ENCODE measurements at regions of chr9 and their contacts with region 1.

Region 1: GRCh38 chr9:79571309-79572031 is at the start of gene TLE4:
- DNase-seq: peak; percentile 98 to 100 (median 99)
- ATAC-seq: peak; percentile 85
- H3K4me3 ChIP-seq: peak within 1 kb of the TSS; percentile 91
- H3K4me3 Mint-ChIP-seq: peak within 1 kb of the TSS; percentile 86
- H3K27ac ChIP-seq: peak within 1 kb of the TSS; percentile 72 to 85
- H3K27ac Mint-ChIP-seq: peak within 1 kb of the TSS; percentile 92
- H3K4me1 ChIP-seq: peaks cover 17% of the 10 kb centered on the region
- H3K4me1 Mint-ChIP-seq: peaks cover 33% of the 10 kb centered on the region
- H3K27me3 ChIP-seq: peaks cover 0 to 9% of the 10 kb centered on the region in 2 experiments
- H3K27me3 Mint-ChIP-seq: peaks cover 4% of the 10 kb centered on the region
- CTCF ChIP-seq: no peak
- total RNA-seq, gene TLE4: 125 to 136 TPM

Region 2: DNA sequence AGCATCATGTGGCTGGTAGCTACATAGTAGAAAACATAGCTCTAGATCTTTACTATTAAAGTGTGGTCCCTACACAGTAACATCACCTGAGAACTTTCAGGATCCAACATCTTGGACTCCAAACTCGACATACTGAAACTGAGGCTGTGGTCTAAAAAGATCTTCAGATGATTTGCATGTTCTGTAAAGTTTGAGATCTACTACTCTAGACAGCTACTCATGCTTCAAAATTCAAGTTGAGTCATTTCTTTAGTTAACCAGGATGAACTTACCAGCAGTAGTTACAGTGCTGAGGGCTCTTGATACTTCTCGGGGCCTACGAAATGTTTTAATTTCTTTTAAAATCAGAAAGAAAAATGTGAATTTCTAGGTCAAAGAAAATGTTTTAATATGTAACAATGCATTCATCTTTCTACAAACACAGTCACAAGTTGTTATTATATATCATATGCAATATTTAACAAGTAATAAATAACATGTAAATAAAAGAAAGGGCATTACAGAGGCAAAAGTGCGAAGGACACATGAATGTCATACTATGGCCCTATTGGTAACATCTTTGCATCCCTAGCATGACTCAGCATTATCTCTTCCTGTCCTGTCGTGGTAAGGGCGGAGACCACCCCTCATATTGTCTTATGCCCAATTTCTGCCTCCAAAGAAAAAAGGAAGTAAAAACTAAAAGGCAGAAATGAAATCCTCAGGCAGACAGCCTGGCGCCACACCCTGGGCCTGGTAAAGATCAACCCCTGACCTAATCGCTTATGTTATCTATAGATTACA is 563.6 kb before region 1 on chr9:
- CTCF ChIA-PET with region 1: no interaction called
- POLR2A ChIA-PET with region 1: no interaction called
- intact Hi-C with region 1: no loop called
- DNase-seq: no peak
- ATAC-seq: no peak
- H3K4me3 ChIP-seq: no peak overlapping the region
- H3K4me3 Mint-ChIP-seq: no peak overlapping the region
- H3K27ac ChIP-seq: no peak overlapping the region
- H3K27ac Mint-ChIP-seq: no peak overlapping the region
- H3K4me1 ChIP-seq: no peaks in the 10 kb centered on the region
- H3K4me1 Mint-ChIP-seq: no peaks in the 10 kb centered on the region
- H3K27me3 ChIP-seq: no peaks in the 10 kb centered on the region
- H3K27me3 Mint-ChIP-seq: peaks cover 6% of the 10 kb centered on the region
- CTCF ChIP-seq: no peak

Region 3: GRCh38 chr9:79471580-79472543 is 99.6 kb before region 1 on chr9:
- CTCF ChIA-PET with region 1: no interaction called
- POLR2A ChIA-PET with region 1: no interaction called
- intact Hi-C with region 1: loop called (anchors 5 to 10 kb)
- DNase-seq: peak in 12 of 14 experiments; percentile 2 to 51 (median 22)
- ATAC-seq: peak; percentile 68
- H3K4me3 ChIP-seq: no peak overlapping the region
- H3K4me3 Mint-ChIP-seq: no peak overlapping the region
- H3K27ac ChIP-seq: no peak overlapping the region
- H3K27ac Mint-ChIP-seq: peak overlapping the region; percentile 70
- H3K4me1 ChIP-seq: no peaks in the 10 kb centered on the region
- H3K4me1 Mint-ChIP-seq: peaks cover 13% of the 10 kb centered on the region
- H3K27me3 ChIP-seq: no peaks in the 10 kb centered on the region
- H3K27me3 Mint-ChIP-seq: no peaks in the 10 kb centered on the region
- CTCF ChIP-seq: peak; percentile 2

Region 4: DNA sequence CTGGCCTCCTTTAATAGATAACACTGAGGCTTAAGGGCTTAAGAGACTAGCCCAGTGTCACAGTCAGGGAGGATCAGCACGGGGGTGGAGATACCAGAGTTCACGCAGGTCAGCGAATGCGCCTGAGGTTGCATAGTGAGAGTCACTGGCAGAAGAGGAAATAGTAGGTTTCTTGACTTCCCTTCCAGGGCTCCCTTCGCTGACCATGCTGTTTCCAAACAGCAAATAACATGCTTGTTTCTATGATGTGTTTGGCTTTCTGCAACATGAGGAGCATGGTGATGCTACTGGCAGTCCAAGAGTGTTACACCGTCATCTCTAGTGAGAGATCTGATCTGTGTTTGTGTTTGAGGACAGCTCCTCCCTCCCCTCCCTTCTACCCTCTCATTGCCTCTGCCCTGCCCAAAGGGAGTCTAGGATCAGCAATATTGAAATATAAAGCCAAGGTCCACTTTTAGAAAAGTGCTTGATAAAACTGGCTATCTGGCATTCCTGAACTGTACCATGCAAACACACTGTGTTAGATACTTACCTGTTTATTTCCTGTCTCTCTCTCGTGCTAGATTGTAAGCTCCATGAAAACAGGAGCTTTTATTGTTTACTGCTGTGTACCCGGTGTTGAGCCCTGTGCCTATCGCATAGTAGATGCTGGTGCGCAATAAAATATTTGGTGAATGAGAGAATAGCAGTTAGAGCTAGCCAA is 12.6 kb after region 1 on chr9:
- CTCF ChIA-PET with region 1: interaction called, 12 read pairs
- POLR2A ChIA-PET with region 1: interaction called, 132 read pairs
- intact Hi-C with region 1: loop called in 1 of 2 experiments (anchors 1 kb)
- DNase-seq: peak in 8 of 14 experiments; percentile 9 to 62 (median 28)
- ATAC-seq: peak; percentile 43
- H3K4me3 ChIP-seq: no peak overlapping the region
- H3K4me3 Mint-ChIP-seq: peak overlapping the region; percentile 54
- H3K27ac ChIP-seq: no peak overlapping the region
- H3K27ac Mint-ChIP-seq: peak overlapping the region; percentile 63
- H3K4me1 ChIP-seq: peaks cover 36% of the 10 kb centered on the region
- H3K4me1 Mint-ChIP-seq: peaks cover 71% of the 10 kb centered on the region
- H3K27me3 ChIP-seq: no peaks in the 10 kb centered on the region
- H3K27me3 Mint-ChIP-seq: no peaks in the 10 kb centered on the region
- CTCF ChIP-seq: no peak

Region 5: GRCh38 chr9:79623799-79624721 is 52.6 kb after region 1 on chr9:
- CTCF ChIA-PET with region 1: interaction called, 5 read pairs
- POLR2A ChIA-PET with region 1: interaction called, 29 read pairs
- intact Hi-C with region 1: no loop called
- DNase-seq: peak in 8 of 14 experiments; percentile 1 to 82 (median 22)
- ATAC-seq: peak; percentile 77
- H3K4me3 ChIP-seq: peak overlapping the region; percentile 10
- H3K4me3 Mint-ChIP-seq: peak overlapping the region; percentile 66
- H3K27ac ChIP-seq: peak overlapping the region in 1 of 2 donors; percentile 16
- H3K27ac Mint-ChIP-seq: peak overlapping the region; percentile 25
- H3K4me1 ChIP-seq: peaks cover 15% of the 10 kb centered on the region
- H3K4me1 Mint-ChIP-seq: peaks cover 72% of the 10 kb centered on the region
- H3K27me3 ChIP-seq: no peaks in the 10 kb centered on the region
- H3K27me3 Mint-ChIP-seq: no peaks in the 10 kb centered on the region
- CTCF ChIP-seq: no peak

Region 6: GRCh38 chr9:79662537-79662956 is 91.1 kb after region 1 on chr9:
- CTCF ChIA-PET with region 1: interaction called, 6 read pairs
- POLR2A ChIA-PET with region 1: interaction called, 7 read pairs
- intact Hi-C with region 1: loop called in 1 of 2 experiments (anchors 5 kb)
- DNase-seq: peak in 3 of 14 experiments; percentile 20 to 42 (median 39)
- ATAC-seq: peak; percentile 58
- H3K4me3 ChIP-seq: no peak overlapping the region
- H3K4me3 Mint-ChIP-seq: peak overlapping the region; percentile 32
- H3K27ac ChIP-seq: no peak overlapping the region
- H3K27ac Mint-ChIP-seq: peak overlapping the region; percentile 52
- H3K4me1 ChIP-seq: peaks cover 11% of the 10 kb centered on the region
- H3K4me1 Mint-ChIP-seq: peaks cover 69% of the 10 kb centered on the region
- H3K27me3 ChIP-seq: no peaks in the 10 kb centered on the region
- H3K27me3 Mint-ChIP-seq: no peaks in the 10 kb centered on the region
- CTCF ChIP-seq: no peak

Measured in CD4-positive, alpha-beta T cell (primary cell).